ENCODE measurements at regions of chr4 and their contacts with region 1.

Region 1: GRCh38 chr4:25667931-25668557 is 12.4 kb downstream of the SLC34A2 start:
- DNase-seq: no peak
- ATAC-seq: no peak
- H3K4me3 ChIP-seq: no peak overlapping the region
- H3K27ac ChIP-seq: no peak overlapping the region
- H3K4me1 ChIP-seq: no peaks in the 10 kb centered on the region
- H3K27me3 ChIP-seq: no peaks in the 10 kb centered on the region; a peak in 1 of 4 replicates
- CTCF ChIP-seq: no peak
- EP300 ChIP-seq: no peak
- POLR2A ChIP-seq: no peak
- RAD21 ChIP-seq: no peak

Region 2: DNA sequence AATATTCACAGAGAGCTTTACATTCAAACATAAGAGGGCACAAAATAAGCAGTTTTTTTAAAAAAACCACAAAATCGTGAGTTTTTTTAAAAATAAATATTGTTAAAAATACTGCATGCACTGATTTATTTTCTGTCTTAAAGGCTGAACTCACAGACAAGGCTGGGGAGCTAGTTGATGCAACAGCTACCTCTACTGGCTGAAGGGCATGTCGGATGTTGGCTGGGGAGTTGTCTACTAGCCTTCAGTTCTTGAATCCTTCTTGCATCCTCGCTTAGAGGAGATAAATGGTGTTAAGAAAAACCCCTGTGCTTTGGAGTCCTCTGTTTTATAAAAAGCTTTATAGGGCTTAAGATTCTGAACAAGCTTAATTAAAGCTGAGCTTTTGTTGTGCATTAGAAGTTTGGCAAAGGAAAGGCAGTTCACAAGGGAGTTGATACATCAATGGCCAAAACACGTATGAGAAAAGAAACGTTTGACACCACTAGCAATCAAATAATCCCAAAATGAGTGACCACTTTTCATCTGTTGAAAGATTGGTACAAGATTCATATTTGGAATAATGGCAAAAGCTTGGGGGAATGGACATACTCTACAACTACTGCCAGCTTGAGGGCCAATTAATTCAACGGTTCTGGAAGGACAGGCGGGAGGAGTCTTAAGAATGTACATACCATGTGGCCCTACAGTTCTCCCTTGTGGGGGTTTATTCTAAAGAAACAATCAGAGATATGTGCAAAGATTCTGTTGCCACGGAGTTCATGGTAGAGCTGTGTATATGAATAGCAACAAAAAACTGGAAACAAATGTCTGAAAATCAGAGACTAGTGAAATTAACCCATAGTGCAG is 100.1 kb after region 1 on chr4:
- CTCF ChIA-PET with region 1: interaction called, 15 read pairs
- POLR2A ChIA-PET with region 1: no interaction called
- RAD21 ChIA-PET with region 1: no interaction called
- SMC1A ChIA-PET with region 1: no interaction called
- in situ Hi-C with region 1: no loop called
- intact Hi-C with region 1: no loop called
- DNase-seq: no peak
- ATAC-seq: peak; percentile 88
- H3K4me3 ChIP-seq: no peak overlapping the region
- H3K27ac ChIP-seq: no peak overlapping the region
- H3K4me1 ChIP-seq: no peaks in the 10 kb centered on the region
- H3K27me3 ChIP-seq: no peaks in the 10 kb centered on the region
- CTCF ChIP-seq: peak; percentile 78 to 88 (median 86)
- EP300 ChIP-seq: no peak
- POLR2A ChIP-seq: no peak
- RAD21 ChIP-seq: peak; percentile 79